Aorta (tissue), 5 donors: ENCODE measurements at regions of chr11 and their contacts with region 1.

Region 1: GRCh38 chr11:119356349-119357031 is 10.0 kb upstream of the MFRP start:
- DNase-seq: peak; percentile 90 to 94
- ATAC-seq: peak; percentile 93
- H3K4me3 ChIP-seq: peak overlapping the region in 1 of 2 donors; percentile 21
- H3K27ac ChIP-seq: no peak overlapping the region
- H3K4me1 ChIP-seq: no peaks in the 10 kb centered on the region
- H3K27me3 ChIP-seq: no peaks in the 10 kb centered on the region

Region 2: DNA sequence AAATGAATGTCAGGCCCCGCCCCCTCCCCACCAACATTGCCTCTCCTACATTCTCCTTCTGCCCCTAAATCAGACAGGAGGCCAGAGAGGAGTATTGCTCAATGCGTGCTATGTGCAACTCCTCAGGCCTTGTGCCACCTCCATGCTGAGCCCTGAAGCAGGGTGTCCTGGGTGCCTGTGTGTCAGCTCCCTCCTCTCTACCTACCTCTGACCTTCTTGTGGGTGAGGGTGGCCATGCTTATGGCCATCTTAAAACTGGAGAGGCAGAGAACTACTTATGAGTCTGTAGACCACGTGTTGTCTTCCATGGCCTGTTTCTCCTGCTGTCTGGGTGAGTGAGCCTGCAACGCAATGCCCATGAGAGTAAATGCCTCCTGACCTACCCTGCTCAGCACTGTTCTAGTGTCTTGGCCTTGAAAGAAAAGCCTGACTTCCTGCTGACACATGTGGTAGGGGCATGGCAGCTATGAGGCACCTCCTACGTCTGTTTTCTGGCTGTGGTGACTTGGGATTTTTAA is 50.1 kb before region 1 on chr11:
- intact Hi-C with region 1: no loop called
- DNase-seq: peak in 1 of 2 donors; percentile 79
- ATAC-seq: peak; percentile 86
- H3K4me3 ChIP-seq: no peak overlapping the region
- H3K27ac ChIP-seq: peak overlapping the region in 1 of 2 donors; percentile 49
- H3K4me1 ChIP-seq: peaks cover 0 to 3% of the 10 kb centered on the region in 2 donors
- H3K27me3 ChIP-seq: no peaks in the 10 kb centered on the region

Region 3: GRCh38 chr11:119334174-119334930 is 22.1 kb before region 1 on chr11 and contains the start of gene RNF26:
- intact Hi-C with region 1: no loop called
- DNase-seq: peak; percentile 95 to 96
- ATAC-seq: peak; percentile 94
- H3K4me3 ChIP-seq: peak within 1 kb of the TSS; percentile 87 to 98
- H3K27ac ChIP-seq: peak within 1 kb of the TSS in 1 of 2 donors; percentile 74
- H3K4me1 ChIP-seq: no peaks in the 10 kb centered on the region
- H3K27me3 ChIP-seq: no peaks in the 10 kb centered on the region
- total RNA-seq, gene RNF26: 16.8 to 17.5 TPM

Region 4: GRCh38 chr11:119373921-119374631 is 17.6 kb after region 1 on chr11:
- intact Hi-C with region 1: loop called (anchors 1 to 2 kb)
- DNase-seq: peak; percentile 82 to 91
- ATAC-seq: peak; percentile 73
- H3K4me3 ChIP-seq: no peak overlapping the region
- H3K27ac ChIP-seq: no peak overlapping the region
- H3K4me1 ChIP-seq: peaks cover 0 to 2% of the 10 kb centered on the region in 2 donors
- H3K27me3 ChIP-seq: no peaks in the 10 kb centered on the region

Region 5: GRCh38 chr11:119474682-119475596 is 118.4 kb after region 1 on chr11:
- intact Hi-C with region 1: loop called (anchors 1 to 2 kb)
- DNase-seq: peak in 1 of 2 donors; percentile 69
- ATAC-seq: peak; percentile 73
- H3K4me3 ChIP-seq: no peak overlapping the region
- H3K27ac ChIP-seq: no peak overlapping the region
- H3K4me1 ChIP-seq: no peaks in the 10 kb centered on the region
- H3K27me3 ChIP-seq: no peaks in the 10 kb centered on the region

Region 6: DNA sequence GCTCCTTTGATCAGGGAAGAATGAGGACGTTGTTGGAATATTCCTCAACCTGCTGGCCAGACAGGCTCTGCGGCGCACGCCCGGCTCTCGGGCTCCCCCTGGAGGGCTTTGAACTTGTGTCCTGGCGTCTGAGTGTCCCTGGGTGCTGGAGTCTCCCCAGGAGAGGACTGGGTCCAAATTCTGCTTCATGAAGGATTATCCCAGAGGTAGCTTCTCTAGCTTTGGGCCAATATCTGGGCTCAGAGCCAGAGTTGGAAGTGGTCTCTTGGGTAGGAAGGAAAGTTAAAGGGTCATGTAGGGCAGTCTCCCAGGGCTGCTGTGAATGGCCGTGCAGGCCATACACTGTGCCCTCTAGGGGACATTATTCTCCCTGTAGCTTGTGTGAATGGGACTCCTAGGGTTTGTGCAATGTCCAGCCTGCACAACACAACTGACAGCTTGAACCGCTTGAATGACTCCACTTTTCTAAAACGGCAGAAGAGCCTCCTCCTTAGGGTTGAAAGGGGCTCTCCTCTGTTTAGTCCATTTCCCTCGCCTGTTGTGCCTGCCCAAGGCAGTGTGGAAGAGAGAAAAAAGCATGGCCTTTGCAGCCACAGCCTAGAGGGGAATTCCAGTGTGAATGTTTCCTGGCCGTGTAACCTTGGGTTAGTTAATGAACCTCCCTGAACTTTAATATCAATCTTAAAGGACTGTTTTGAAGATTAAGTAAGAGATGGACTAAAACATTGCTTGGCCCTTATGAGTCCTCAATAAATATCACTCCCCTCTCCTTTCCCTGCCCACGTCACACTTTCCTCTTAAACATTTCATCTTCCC is 177.6 kb after region 1 on chr11:
- intact Hi-C with region 1: no loop called
- DNase-seq: peak; percentile 81 to 92
- ATAC-seq: peak; percentile 60
- H3K4me3 ChIP-seq: no peak overlapping the region
- H3K27ac ChIP-seq: no peak overlapping the region
- H3K4me1 ChIP-seq: no peaks in the 10 kb centered on the region
- H3K27me3 ChIP-seq: no peaks in the 10 kb centered on the region